ENCODE measurements at regions of chr6 and their contacts with region 1.

Region 1: GRCh38 chr6:158718461-158719046 is 68.7 kb downstream of the SYTL3 start:
- DNase-seq: no peak
- H3K4me3 Mint-ChIP-seq: no peak overlapping the region
- H3K27ac Mint-ChIP-seq: no peak overlapping the region
- H3K4me1 Mint-ChIP-seq: peaks cover 58% of the 10 kb centered on the region
- H3K27me3 Mint-ChIP-seq: no peaks in the 10 kb centered on the region

Region 2: GRCh38 chr6:158752613-158753012 is 34.1 kb after region 1 on chr6:
- intact Hi-C with region 1: no loop called
- DNase-seq: no peak
- H3K4me3 Mint-ChIP-seq: no peak overlapping the region
- H3K27ac Mint-ChIP-seq: no peak overlapping the region
- H3K4me1 Mint-ChIP-seq: no peaks in the 10 kb centered on the region
- H3K27me3 Mint-ChIP-seq: no peaks in the 10 kb centered on the region

Region 3: DNA sequence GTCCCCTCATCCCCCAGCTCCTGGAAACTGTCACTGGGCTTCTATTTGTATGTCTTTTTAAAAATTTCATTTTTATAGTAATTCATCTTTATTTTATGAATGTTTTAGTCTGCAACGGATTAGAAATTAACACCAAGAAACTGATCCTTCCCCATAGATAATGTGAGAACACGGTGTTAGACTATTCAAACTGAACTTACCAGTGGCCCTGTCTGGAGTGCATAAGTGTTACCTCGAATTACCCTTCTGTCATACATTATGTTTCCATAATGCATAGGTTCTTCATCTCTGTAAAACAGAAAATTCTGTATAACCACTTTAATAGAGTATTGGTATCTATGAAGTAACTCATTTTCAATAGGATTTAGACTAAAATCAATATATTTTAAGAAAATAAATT is 275.1 kb after region 1 on chr6:
- intact Hi-C with region 1: loop called (anchors 2 kb)
- DNase-seq: peak; percentile 2
- H3K4me3 Mint-ChIP-seq: no peak overlapping the region
- H3K27ac Mint-ChIP-seq: no peak overlapping the region
- H3K4me1 Mint-ChIP-seq: peaks cover 25% of the 10 kb centered on the region
- H3K27me3 Mint-ChIP-seq: no peaks in the 10 kb centered on the region

Measured in activated CD4-positive, alpha-beta T cell treated with anti-CD3 and anti-CD28 coated beads, Interleukin-2, amount 10 ng/mL, durations not matched to agents 24 days and 14 days (primary cell).